T-cell (primary cell): ENCODE measurements at regions of chr17 and their contacts with region 1.

Region 1: DNA sequence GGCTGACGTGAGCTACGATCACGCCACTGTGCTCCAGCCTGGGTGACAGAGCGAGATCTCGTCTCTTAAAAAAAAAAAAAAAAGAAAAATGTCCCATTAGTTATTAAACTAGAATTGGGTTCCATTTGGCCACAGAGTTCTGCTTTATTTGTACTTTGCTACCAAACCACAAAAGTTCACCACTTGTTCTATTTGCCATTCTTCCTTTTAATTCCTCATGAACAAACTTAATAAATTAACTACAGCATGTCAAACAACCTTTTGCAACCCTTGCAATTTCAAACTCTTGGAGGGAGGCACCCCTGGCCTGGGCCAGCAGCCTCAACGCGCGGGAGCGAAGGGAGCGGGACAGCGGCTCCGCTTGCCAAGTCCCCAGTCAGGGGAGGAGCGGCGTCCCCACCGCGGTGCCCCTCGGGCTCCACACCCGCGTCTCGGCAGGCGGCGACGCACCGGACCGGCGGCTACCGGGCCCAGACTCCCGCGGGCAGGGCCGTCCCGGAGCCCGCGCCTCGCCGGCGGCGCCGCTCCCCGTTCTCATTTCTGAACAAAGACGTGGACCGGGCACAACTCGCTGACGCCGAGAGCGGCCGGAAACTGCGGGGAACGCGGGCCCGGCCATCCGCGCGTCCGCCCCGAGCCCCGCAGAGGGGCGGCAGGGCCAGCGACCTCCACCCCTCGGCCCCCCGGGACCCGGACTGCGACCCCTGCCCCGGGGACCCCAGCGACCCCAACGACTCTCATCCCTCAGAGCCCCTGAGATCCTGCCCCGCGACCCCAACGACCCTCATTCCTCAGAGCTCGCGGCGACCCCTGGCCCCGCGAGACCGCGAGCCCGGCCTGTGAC is 747 bp downstream of the CYTH1 start:
- DNase-seq: peak in 16 of 35 experiments; percentile 18 to 67 (median 46)
- ATAC-seq: peak in 3 of 4 experiments; percentile 2 to 14 (median 5)
- H3K4me3 ChIP-seq: peak overlapping the region; percentile 62 to 94
- H3K4me3 Mint-ChIP-seq: peak overlapping the region; percentile 89 to 97 (median 90)
- H3K27ac ChIP-seq: peak overlapping the region; percentile 83
- H3K27ac Mint-ChIP-seq: peak overlapping the region; percentile 93 to 94
- H3K4me1 ChIP-seq: peaks cover 14 to 80% of the 10 kb centered on the region in 2 experiments
- H3K4me1 Mint-ChIP-seq: peaks cover 54 to 62% (median 59%) of the 10 kb centered on the region in 3 donors
- H3K27me3 ChIP-seq: no peaks in the 10 kb centered on the region
- H3K27me3 Mint-ChIP-seq: no peaks in the 10 kb centered on the region

Region 2: DNA sequence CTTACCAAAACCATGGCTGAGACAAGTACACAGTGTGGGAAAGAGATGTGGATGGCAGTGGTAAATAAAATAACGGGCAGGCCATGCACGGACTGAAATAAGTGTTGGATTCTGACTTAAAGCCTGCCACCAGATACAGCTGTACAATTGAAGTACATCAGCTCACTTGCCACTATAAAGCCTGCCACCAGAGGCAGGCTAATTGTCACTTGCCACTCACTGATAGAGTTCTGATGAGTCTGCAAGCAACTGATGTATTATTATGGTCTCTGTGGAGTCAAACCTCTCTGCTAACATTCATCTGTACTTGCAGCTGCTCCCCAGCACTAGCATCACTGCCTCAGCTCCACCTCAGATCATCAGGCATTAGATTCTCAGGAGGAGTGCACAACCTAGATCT is 92.3 kb before region 1 on chr17:
- CTCF ChIA-PET with region 1: no interaction called
- POLR2A ChIA-PET with region 1: no interaction called
- DNase-seq: peak in 1 of 35 experiments; percentile 33
- ATAC-seq: peak; percentile 29 to 47 (median 44)
- H3K4me3 ChIP-seq: no peak overlapping the region
- H3K4me3 Mint-ChIP-seq: no peak overlapping the region
- H3K27ac ChIP-seq: no peak overlapping the region
- H3K27ac Mint-ChIP-seq: peak overlapping the region; percentile 52 to 53
- H3K4me1 ChIP-seq: no peaks in the 10 kb centered on the region
- H3K4me1 Mint-ChIP-seq: peaks cover 4 to 8% (median 5%) of the 10 kb centered on the region in 3 donors
- H3K27me3 ChIP-seq: no peaks in the 10 kb centered on the region
- H3K27me3 Mint-ChIP-seq: no peaks in the 10 kb centered on the region

Region 3: GRCh38 chr17:78748730-78749317 is 32.5 kb before region 1 on chr17:
- CTCF ChIA-PET with region 1: interaction called in 1 of 2 experiments, 11 read pairs
- POLR2A ChIA-PET with region 1: interaction called in 1 of 2 experiments, 5 read pairs
- DNase-seq: peak; percentile 58 to 89 (median 79)
- ATAC-seq: peak; percentile 89 to 94 (median 93)
- H3K4me3 ChIP-seq: peak overlapping the region; percentile 35 to 66
- H3K4me3 Mint-ChIP-seq: peak overlapping the region; percentile 73 to 83 (median 74)
- H3K27ac ChIP-seq: peak overlapping the region; percentile 93
- H3K27ac Mint-ChIP-seq: peak overlapping the region; percentile 90 to 94
- H3K4me1 ChIP-seq: peaks cover 85 to 89% of the 10 kb centered on the region in 2 experiments
- H3K4me1 Mint-ChIP-seq: peaks cover 97 to 100% (median 97%) of the 10 kb centered on the region in 3 donors
- H3K27me3 ChIP-seq: no peaks in the 10 kb centered on the region
- H3K27me3 Mint-ChIP-seq: no peaks in the 10 kb centered on the region

Region 4: GRCh38 chr17:78759203-78759968 is 21.9 kb before region 1 on chr17:
- CTCF ChIA-PET with region 1: interaction called, 3 to 9 read pairs
- POLR2A ChIA-PET with region 1: interaction called, 12 to 23 read pairs
- DNase-seq: peak; percentile 57 to 94 (median 89)
- ATAC-seq: peak; percentile 89 to 95 (median 93)
- H3K4me3 ChIP-seq: peak overlapping the region; percentile 16 to 39
- H3K4me3 Mint-ChIP-seq: peak overlapping the region; percentile 60 to 70 (median 66)
- H3K27ac ChIP-seq: peak overlapping the region; percentile 95
- H3K27ac Mint-ChIP-seq: peak overlapping the region; percentile 92 to 94
- H3K4me1 ChIP-seq: peaks cover 56 to 85% of the 10 kb centered on the region in 2 experiments
- H3K4me1 Mint-ChIP-seq: peaks cover 83 to 89% (median 84%) of the 10 kb centered on the region in 3 donors
- H3K27me3 ChIP-seq: no peaks in the 10 kb centered on the region
- H3K27me3 Mint-ChIP-seq: no peaks in the 10 kb centered on the region

Region 5: DNA sequence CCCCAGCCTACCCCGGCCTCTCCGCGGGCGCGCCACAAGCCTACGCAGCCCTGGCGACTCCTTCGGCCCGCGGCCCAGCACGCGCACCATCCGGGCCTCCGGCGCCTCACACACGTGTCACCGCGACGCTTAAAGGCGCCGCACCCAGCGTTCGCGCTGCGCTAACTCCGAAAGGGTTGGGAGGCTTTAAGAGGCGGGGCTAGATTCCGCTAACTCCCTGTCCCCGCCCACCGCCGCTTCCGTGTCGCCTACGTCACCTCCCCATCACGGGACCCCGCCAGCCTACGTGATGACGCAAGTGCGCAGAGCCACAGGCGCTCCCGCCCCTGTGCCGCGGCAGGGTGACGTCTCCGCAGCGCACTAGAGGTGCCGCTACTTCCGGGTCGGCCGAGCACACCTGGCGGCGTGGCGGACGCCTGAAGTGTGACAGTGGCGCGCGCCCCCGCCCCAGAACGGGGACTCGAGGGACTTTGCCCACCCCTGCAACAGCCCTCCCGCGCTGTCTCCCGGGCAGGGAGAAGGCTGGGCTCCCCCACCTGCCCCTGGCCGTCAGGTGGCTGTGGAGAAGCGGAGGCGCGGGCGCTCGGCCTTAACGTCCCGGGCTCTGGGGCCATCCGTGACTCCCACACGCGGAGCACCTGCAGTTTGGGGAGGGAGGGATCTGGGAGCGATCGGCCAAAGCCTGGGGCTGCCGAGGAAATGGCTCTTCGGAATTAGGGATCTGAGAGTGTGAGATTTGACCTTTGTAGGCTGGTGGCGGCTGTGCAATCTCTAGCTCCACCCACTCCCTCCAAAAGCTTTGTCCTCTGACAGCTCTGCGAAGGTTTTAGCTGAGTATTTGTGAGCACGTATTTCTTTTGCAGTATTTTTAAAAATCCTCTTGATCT is 59.6 kb after region 1 on chr17 and contains the start of gene USP36:
- CTCF ChIA-PET with region 1: no interaction called
- POLR2A ChIA-PET with region 1: interaction called in 1 of 2 experiments, 11 read pairs
- DNase-seq: peak; percentile 98 to 100 (median 100)
- ATAC-seq: peak; percentile 87 to 90 (median 88)
- H3K4me3 ChIP-seq: peak within 1 kb of the TSS; percentile 64 to 95
- H3K4me3 Mint-ChIP-seq: peak within 1 kb of the TSS; percentile 91 to 97 (median 91)
- H3K27ac ChIP-seq: peak within 1 kb of the TSS; percentile 99
- H3K27ac Mint-ChIP-seq: peak within 1 kb of the TSS; percentile 96 to 97
- H3K4me1 ChIP-seq: peaks cover 12 to 41% of the 10 kb centered on the region in 2 experiments
- H3K4me1 Mint-ChIP-seq: peaks cover 46 to 51% (median 47%) of the 10 kb centered on the region in 3 donors
- H3K27me3 ChIP-seq: no peaks in the 10 kb centered on the region
- H3K27me3 Mint-ChIP-seq: no peaks in the 10 kb centered on the region
- total RNA-seq, gene USP36: 132 to 487 (median 143) TPM

Region 6: GRCh38 chr17:79137015-79137788 is 355.9 kb after region 1 on chr17:
- CTCF ChIA-PET with region 1: no interaction called
- POLR2A ChIA-PET with region 1: no interaction called
- DNase-seq: no peak
- ATAC-seq: no peak
- H3K4me3 ChIP-seq: no peak overlapping the region
- H3K4me3 Mint-ChIP-seq: no peak overlapping the region
- H3K27ac ChIP-seq: no peak overlapping the region
- H3K27ac Mint-ChIP-seq: no peak overlapping the region
- H3K4me1 ChIP-seq: no peaks in the 10 kb centered on the region
- H3K4me1 Mint-ChIP-seq: no peaks in the 10 kb centered on the region
- H3K27me3 ChIP-seq: peaks cover 0 to 72% of the 10 kb centered on the region in 2 experiments
- H3K27me3 Mint-ChIP-seq: peaks cover 17 to 42% of the 10 kb centered on the region in 2 donors

Region 7: DNA sequence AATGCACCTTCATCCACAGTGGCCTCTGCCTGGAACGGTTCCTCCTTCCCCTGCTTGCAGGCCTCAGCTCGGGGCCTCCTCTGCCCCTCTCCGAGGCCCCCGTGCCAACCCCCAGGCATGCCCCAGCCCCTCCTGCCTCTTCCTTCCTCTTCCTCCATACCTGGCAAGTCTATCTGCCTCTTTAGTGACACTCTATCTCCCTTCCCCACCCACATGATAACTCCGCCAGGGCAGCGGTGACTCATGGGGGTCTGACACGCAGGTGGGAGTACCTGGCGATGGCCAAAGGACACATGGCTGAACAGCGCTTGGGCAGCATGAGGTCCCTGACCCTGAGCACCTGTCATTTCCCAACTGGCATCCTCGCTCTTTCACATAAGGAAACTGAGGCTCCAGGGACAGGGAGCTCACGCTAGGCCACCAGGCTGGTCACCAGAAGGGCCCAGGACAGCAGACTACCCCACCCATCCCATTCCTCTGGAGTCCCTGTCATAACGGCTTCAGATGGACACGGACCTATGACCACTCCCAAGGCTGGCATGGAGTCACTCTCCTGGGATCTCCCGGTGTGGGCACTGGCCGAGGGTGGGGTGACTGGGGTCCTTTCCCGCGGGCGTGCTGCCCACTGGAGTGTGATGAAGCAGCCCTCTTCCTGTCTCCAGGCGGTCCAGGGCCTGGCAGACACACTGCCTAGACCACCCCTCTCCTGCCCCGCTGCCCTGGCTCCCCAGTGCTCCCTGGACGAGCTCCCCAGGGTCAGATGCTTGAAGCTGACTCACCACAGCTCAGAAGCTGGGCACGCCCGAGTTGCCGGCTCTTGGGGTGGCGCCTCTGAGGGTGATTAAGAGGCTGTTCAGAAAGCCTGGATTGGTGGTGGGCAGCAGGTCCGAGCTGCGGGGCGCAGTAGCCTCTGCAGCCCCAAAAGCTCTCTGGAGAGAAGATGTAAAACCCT is 393.9 kb after region 1 on chr17:
- CTCF ChIA-PET with region 1: no interaction called
- POLR2A ChIA-PET with region 1: no interaction called
- DNase-seq: no peak
- ATAC-seq: no peak
- H3K4me3 ChIP-seq: no peak overlapping the region
- H3K4me3 Mint-ChIP-seq: no peak overlapping the region
- H3K27ac ChIP-seq: no peak overlapping the region
- H3K27ac Mint-ChIP-seq: no peak overlapping the region
- H3K4me1 ChIP-seq: no peaks in the 10 kb centered on the region
- H3K4me1 Mint-ChIP-seq: no peaks in the 10 kb centered on the region
- H3K27me3 ChIP-seq: peaks cover 0 to 32% of the 10 kb centered on the region in 2 experiments
- H3K27me3 Mint-ChIP-seq: peaks cover 1 to 14% of the 10 kb centered on the region in 2 donors